ENCODE measurements at regions of chr19 and their contacts with region 1.

Region 1: GRCh38 chr19:36214386-36215275 is at the starts of genes ZNF146 and ZNF565:
- DNase-seq: peak; percentile 99
- ATAC-seq: peak; percentile 88
- H3K4me3 Mint-ChIP-seq: no peak within 1 kb of the TSS
- H3K27ac Mint-ChIP-seq: no peak within 1 kb of the TSS
- H3K4me1 Mint-ChIP-seq: peaks cover 25% of the 10 kb centered on the region
- H3K27me3 Mint-ChIP-seq: no peaks in the 10 kb centered on the region
- total RNA-seq, gene ZNF146: 105 to 111 TPM
- total RNA-seq, gene ZNF565: 2.8 to 2.9 TPM

Region 2: GRCh38 chr19:35882114-35882832 is 332.4 kb before region 1 on chr19:
- CTCF ChIA-PET with region 1: no interaction called
- POLR2A ChIA-PET with region 1: interaction called, 10 read pairs
- intact Hi-C with region 1: no loop called
- DNase-seq: peak; percentile 35
- ATAC-seq: peak; percentile 53
- H3K4me3 Mint-ChIP-seq: no peak overlapping the region
- H3K27ac Mint-ChIP-seq: no peak overlapping the region
- H3K4me1 Mint-ChIP-seq: peaks cover 2% of the 10 kb centered on the region
- H3K27me3 Mint-ChIP-seq: peaks cover 12% of the 10 kb centered on the region

Region 3: DNA sequence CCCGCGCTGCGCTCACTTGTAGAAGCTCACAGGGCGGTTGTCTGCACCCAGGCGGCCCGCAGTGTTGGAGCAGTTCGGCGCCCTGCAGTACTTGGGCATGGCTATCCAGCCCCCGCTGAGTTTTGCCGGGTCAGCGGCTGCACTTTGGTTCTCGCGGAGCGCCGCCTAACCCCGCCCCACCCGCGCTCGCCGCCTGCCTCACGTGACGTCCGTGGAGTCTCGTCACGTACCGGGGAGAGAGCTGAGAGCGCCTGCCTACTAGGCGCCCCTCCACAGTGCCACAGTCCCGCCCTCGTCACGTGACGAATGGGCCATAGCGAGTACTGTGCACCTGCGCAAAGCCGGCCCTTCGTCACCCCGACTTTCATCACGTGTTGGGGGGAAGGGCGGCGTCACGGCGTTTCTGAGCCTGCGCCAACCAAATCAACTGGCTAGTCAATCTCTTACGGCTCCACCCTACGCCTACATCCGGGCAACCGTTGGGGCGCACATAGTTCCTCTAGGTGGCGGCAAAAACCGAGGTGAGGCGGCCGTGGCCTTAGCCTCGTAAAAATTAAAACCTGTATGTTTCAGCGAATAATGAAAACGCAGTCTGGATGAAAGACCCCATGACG is 160.4 kb before region 1 on chr19 and contains the start of gene THAP8:
- CTCF ChIA-PET with region 1: no interaction called
- POLR2A ChIA-PET with region 1: interaction called, 3 read pairs
- intact Hi-C with region 1: loop called in 1 of 2 experiments (anchors 1 kb)
- DNase-seq: peak; percentile 100
- ATAC-seq: peak; percentile 91
- H3K4me3 Mint-ChIP-seq: peak within 1 kb of the TSS; percentile 92
- H3K27ac Mint-ChIP-seq: peak within 1 kb of the TSS; percentile 97
- H3K4me1 Mint-ChIP-seq: peaks cover 14% of the 10 kb centered on the region
- H3K27me3 Mint-ChIP-seq: no peaks in the 10 kb centered on the region
- total RNA-seq, gene THAP8: 3.1 to 3.4 TPM

Region 4: GRCh38 chr19:36093146-36093662 is 121.4 kb before region 1 on chr19:
- CTCF ChIA-PET with region 1: no interaction called
- POLR2A ChIA-PET with region 1: no interaction called
- intact Hi-C with region 1: no loop called
- DNase-seq: peak; percentile 59
- ATAC-seq: peak; percentile 87
- H3K4me3 Mint-ChIP-seq: no peak overlapping the region
- H3K27ac Mint-ChIP-seq: peak overlapping the region; percentile 47
- H3K4me1 Mint-ChIP-seq: peaks cover 19% of the 10 kb centered on the region
- H3K27me3 Mint-ChIP-seq: no peaks in the 10 kb centered on the region

Region 5: DNA sequence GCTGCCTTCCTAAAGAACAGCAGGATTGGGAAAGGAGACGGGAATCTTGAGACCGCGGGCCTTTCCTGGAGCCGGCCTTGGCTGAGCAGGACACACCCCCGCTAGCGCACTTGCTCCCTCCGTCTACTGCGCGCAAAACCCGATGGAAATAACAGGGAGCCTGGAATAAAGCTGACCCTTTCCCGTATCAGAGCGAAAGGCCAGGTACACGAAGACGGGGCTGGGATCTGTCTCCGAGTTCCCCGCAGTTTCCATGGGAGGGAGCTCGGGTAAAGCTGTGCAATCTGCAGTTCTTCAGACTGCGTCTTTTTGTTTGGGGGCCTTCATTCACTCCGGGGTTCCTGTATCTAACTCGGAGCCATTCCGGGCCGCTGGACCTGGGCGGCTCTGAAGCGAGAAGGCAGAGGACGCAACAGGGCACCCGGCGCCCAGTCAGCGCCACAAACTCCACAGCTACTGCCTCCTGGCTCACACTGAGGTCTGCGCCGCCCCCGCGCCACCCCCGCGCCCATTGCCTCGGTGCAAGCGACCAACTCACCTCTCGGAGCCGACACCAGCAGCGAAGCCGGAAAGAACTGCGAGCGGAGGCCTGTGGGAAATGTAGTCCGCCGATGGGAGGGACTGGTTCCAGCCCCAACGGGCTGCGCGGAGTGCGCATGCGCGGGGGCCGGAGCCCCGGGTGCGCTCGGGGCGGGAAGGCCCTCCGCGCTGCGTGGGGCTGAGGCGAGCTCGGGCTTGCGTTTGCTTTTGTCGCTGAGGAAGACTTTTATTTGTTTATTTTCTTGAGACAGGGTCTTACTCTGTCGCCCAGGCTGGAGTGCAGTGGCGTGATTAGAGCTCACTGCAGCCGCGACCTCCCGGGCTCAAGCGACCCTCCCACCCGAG is 164.2 kb after region 1 on chr19 and contains the start of gene ZFP14:
- CTCF ChIA-PET with region 1: no interaction called
- POLR2A ChIA-PET with region 1: no interaction called
- intact Hi-C with region 1: loop called in 1 of 2 experiments (anchors 1 kb)
- DNase-seq: peak; percentile 97
- ATAC-seq: peak; percentile 99
- H3K4me3 Mint-ChIP-seq: peak within 1 kb of the TSS; percentile 93
- H3K27ac Mint-ChIP-seq: peak within 1 kb of the TSS; percentile 88
- H3K4me1 Mint-ChIP-seq: peaks cover 18% of the 10 kb centered on the region
- H3K27me3 Mint-ChIP-seq: no peaks in the 10 kb centered on the region
- total RNA-seq, gene ZFP14: 1.4 to 1.8 TPM

Region 6: DNA sequence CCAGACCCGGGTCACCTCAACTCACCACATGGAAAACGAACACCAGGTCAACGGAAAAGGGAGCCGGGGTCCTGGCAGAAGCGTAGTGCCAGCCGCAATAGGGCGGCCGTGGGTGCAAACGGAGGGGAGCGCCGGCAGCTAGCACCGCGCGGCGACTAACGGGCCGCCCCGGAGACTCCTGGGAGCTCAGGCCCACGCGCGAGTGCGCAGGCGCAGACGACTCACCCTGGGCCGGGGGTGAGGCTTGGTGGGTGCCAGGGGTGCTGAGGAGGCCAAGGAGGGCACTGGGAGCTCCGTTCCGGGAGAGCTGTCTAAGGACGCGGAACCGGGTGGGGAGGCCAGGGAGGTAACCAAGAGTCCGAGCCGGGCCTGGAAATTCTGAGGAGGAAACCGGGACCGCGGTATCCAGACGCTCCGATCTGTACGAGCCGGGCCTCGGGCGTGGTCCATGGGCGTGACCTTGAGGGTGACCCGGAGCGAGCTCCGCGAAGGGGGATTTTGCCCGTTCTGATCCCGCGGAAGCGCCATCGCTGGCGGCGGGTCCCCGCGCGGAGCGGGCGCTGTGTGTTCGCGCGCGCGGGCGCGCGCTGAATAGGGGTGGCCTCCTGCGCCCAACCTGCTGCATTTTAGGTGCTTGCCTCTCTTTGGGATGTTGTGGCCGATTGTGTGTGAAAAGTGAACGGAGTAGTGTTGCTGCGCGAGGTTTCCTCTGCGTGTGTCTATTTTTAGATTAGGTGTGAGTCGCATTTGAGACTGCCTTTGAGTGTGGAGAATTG is 390.7 kb after region 1 on chr19 and contains the start of gene ZNF382:
- CTCF ChIA-PET with region 1: no interaction called
- POLR2A ChIA-PET with region 1: no interaction called
- intact Hi-C with region 1: loop called in 1 of 2 experiments (anchors 2 kb)
- DNase-seq: peak; percentile 94
- ATAC-seq: peak; percentile 86
- H3K4me3 Mint-ChIP-seq: peak within 1 kb of the TSS; percentile 81
- H3K27ac Mint-ChIP-seq: peak within 1 kb of the TSS; percentile 91
- H3K4me1 Mint-ChIP-seq: peaks cover 20% of the 10 kb centered on the region
- H3K27me3 Mint-ChIP-seq: no peaks in the 10 kb centered on the region
- total RNA-seq, gene ZNF382: 14.9 to 20.0 TPM

Region 7: GRCh38 chr19:36850559-36851442 is 636.2 kb after region 1 on chr19 and contains the start of gene ZNF345:
- CTCF ChIA-PET with region 1: no interaction called
- POLR2A ChIA-PET with region 1: interaction called, 5 read pairs
- intact Hi-C with region 1: loop called in 1 of 2 experiments (anchors 1 kb)
- DNase-seq: peak; percentile 91
- ATAC-seq: peak; percentile 82
- H3K4me3 Mint-ChIP-seq: no peak within 1 kb of the TSS
- H3K27ac Mint-ChIP-seq: no peak within 1 kb of the TSS
- H3K4me1 Mint-ChIP-seq: peaks cover 10% of the 10 kb centered on the region
- H3K27me3 Mint-ChIP-seq: no peaks in the 10 kb centered on the region
- total RNA-seq, gene ZNF345: 3.5 to 4.6 TPM

Region 8: GRCh38 chr19:37594304-37594981 is 1379.8 kb after region 1 on chr19 and contains the starts of genes ZNF540 and ZNF571:
- CTCF ChIA-PET with region 1: no interaction called
- POLR2A ChIA-PET with region 1: no interaction called
- intact Hi-C with region 1: loop called in 1 of 2 experiments (anchors 1 kb)
- DNase-seq: peak; percentile 97
- ATAC-seq: peak; percentile 97
- H3K4me3 Mint-ChIP-seq: peak within 1 kb of the TSS; percentile 94
- H3K27ac Mint-ChIP-seq: peak within 1 kb of the TSS; percentile 99
- H3K4me1 Mint-ChIP-seq: peaks cover 27% of the 10 kb centered on the region
- H3K27me3 Mint-ChIP-seq: no peaks in the 10 kb centered on the region
- total RNA-seq, gene ZNF540: 0.67 to 1.1 TPM
- total RNA-seq, gene ZNF571: 2.4 to 2.9 TPM

Measured in activated CD4-positive, alpha-beta T cell treated with anti-CD3 and anti-CD28 coated beads for 36 hours (primary cell).